ENCODE measurements at regions of chr10 and their contacts with region 1.

Region 1: GRCh38 chr10:126904819-126905686 is at the start of gene DOCK1:
- DNase-seq: peak in 1 of 2 experiments; percentile 52
- H3K4me3 ChIP-seq: peak within 1 kb of the TSS; percentile 73
- H3K27ac ChIP-seq: no peak within 1 kb of the TSS
- H3K4me1 ChIP-seq: peaks cover 27% of the 10 kb centered on the region
- H3K27me3 ChIP-seq: no peaks in the 10 kb centered on the region
- CTCF ChIP-seq: no peak
- total RNA-seq, gene DOCK1: 21.4 and 24.8 TPM in 2 replicates

Region 2: GRCh38 chr10:125878957-125879835 is 1025.9 kb before region 1 on chr10:
- CTCF ChIA-PET with region 1: no interaction called
- POLR2A ChIA-PET with region 1: no interaction called
- intact Hi-C with region 1: loop called (anchors 10 kb)
- DNase-seq: peak; percentile 53 to 89
- H3K4me3 ChIP-seq: no peak overlapping the region
- H3K27ac ChIP-seq: peak overlapping the region; percentile 76
- H3K4me1 ChIP-seq: peaks cover 12% of the 10 kb centered on the region
- H3K27me3 ChIP-seq: no peaks in the 10 kb centered on the region
- CTCF ChIP-seq: no peak

Region 3: DNA sequence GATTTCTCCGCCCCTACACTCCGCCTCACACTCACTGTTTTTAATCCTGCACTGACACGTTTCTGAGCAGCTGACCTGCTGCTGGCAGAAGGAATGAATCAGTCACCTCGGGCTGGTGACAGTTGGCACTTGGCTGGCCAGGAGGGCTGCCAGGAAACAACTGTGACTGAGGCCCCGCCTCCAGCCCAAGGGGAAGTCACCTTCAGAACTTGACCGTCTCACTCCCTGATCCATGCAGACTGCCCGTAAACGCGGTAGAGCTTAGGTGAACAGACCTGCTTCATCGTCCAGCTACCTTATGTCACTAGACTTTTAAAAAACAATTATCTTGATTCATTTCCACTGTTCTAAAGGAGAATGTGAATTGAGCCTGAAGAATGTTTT is 107.7 kb after region 1 on chr10:
- CTCF ChIA-PET with region 1: no interaction called
- POLR2A ChIA-PET with region 1: no interaction called
- intact Hi-C with region 1: loop called (anchors 2 kb)
- DNase-seq: peak; percentile 83 to 90
- H3K4me3 ChIP-seq: peak overlapping the region; percentile 46; the same call in 1 of the 2 replicates
- H3K27ac ChIP-seq: peak overlapping the region; percentile 91
- H3K4me1 ChIP-seq: peaks cover 31% of the 10 kb centered on the region
- H3K27me3 ChIP-seq: no peaks in the 10 kb centered on the region
- CTCF ChIP-seq: no peak

Measured in PC-9 (cell line).